Aorta (tissue), 5 donors: ENCODE measurements at regions of chr14 and their contacts with region 1.

Region 1: DNA sequence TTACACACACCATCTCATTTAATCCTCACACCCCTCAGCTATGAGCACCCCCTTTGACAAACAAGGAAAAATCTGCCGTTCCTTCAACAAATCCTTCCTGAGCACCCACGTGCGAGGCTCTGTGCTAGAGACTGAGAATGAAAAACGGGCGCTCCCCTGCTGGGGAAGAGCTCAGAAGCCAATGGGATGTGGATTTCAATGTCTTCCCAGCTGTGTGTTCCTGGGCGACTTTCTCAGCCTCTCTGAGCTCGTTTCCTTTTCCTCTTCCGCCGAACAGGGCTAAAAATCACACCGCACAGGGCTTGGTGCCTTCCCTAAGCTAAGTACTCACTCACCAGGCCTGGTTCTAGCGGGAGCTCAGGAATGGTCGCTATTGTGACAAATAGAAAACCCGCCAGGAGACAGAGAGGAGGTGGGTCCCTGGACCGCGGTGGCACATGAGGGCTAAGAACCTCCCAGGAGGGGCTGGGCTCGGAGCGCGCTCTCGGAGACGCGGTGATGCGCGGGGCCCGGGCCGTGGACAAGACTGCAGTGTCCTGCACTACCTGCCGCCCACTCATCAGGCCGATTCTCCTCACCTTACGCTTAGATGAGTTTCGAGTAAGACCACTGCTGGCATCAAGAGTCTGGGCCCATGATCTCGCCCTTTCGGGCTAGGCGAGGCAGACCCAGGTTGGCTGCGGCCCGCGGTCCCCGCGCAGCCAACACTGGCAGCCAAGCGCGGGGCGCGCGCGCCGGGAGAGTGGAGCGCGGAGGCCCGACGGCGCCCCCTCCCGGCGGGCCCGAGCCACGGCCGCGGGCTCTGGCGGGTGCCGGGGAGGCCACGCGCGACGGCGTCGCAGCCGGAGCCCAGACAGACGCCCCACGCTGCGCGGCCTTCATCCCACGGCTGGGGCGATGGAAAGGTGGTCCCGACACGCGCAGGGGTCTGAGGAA is 17.0 kb downstream of the ZDHHC22 start:
- DNase-seq: peak; percentile 71 to 85
- ATAC-seq: peak; percentile 87
- H3K4me3 ChIP-seq: peak overlapping the region; percentile 12 to 49
- H3K27ac ChIP-seq: no peak overlapping the region
- H3K4me1 ChIP-seq: no peaks in the 10 kb centered on the region
- H3K27me3 ChIP-seq: no peaks in the 10 kb centered on the region

Region 2: DNA sequence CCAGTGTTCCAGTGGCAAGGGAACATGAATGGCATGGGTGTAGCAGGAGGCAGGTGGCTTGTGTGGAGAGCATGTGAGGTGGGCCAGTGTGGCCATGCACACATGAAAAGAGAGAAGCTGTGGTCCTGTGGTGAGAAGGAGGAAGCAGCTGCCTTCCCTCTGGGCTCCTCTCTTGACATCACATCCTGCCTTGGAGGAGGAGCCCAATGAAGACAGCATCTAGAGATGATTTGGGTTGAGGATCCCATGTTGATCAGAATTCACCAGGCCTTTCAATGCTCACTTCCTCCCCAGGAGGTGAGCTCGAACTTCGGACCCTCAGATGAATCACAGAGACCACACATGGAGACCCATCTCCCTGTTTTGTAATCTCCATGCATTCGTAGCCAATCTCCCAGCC is 215.8 kb before region 1 on chr14:
- intact Hi-C with region 1: no loop called
- DNase-seq: peak in 1 of 2 donors; percentile 81
- ATAC-seq: no peak
- H3K4me3 ChIP-seq: no peak overlapping the region
- H3K27ac ChIP-seq: no peak overlapping the region
- H3K4me1 ChIP-seq: no peaks in the 10 kb centered on the region
- H3K27me3 ChIP-seq: no peaks in the 10 kb centered on the region

Region 3: DNA sequence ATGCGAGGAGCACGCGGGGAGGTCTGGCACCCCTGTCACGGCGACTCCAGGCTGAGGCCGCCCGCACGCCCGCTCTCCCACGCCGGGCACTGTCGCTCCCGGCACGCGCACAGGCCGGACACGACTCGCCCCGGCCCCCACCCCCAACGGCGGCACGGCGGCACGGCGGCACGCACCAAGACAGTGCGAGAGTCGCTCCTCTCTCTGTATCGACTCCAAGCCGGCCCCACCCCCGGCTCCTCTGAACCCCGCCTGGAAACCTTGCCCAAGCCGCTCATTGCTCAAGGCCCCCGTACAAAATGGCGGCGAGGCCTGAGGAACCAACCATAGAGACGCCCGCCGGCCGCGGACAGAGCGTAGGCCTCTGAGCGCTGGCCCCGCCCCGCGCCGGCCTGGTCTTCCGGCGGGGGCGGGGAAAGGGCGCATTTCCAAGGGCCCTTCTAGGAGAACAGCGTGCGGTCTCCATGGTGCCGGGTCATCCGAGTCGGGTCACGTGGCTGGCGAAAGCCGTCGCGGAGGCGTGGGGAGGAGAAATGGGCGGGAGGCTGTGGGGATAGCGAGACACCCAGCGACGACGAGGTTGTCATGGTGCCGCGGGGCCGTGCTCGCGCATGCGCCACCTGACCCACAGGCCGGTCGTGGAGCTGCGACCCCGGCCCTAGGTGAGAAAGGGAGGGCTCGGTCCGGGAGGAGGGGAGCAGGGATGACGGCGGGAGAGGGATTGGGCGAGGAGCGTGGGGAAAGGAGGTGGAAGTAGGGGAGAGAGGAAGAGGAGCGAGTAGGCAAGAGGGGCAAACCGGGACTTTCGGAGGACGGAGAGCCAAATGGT is 26.7 kb before region 1 on chr14 and contains the start of gene CIPC:
- intact Hi-C with region 1: loop called in 1 of 2 experiments (anchors 2 kb)
- DNase-seq: peak; percentile 100
- ATAC-seq: peak; percentile 98
- H3K4me3 ChIP-seq: peak within 1 kb of the TSS; percentile 65 to 81
- H3K27ac ChIP-seq: peak within 1 kb of the TSS; percentile 74 to 98
- H3K4me1 ChIP-seq: no peaks in the 10 kb centered on the region
- H3K27me3 ChIP-seq: no peaks in the 10 kb centered on the region
- total RNA-seq, gene CIPC: 23.1 to 24.4 TPM